ENCODE measurements at regions of chr7 and their contacts with region 1.

Region 1: GRCh38 chr7:34886850-34887249 is 150.4 kb downstream of the DPY19L1 start:
- DNase-seq: peak in 1 of 2 experiments; percentile 52
- H3K4me3 ChIP-seq: no peak overlapping the region
- H3K27ac ChIP-seq: no peak overlapping the region
- H3K4me1 ChIP-seq: peaks cover 11% of the 10 kb centered on the region
- H3K27me3 ChIP-seq: no peaks in the 10 kb centered on the region
- CTCF ChIP-seq: no peak

Region 2: GRCh38 chr7:34128762-34129161 is 758.1 kb before region 1 on chr7:
- CTCF ChIA-PET with region 1: interaction called, 11 read pairs
- POLR2A ChIA-PET with region 1: no interaction called
- intact Hi-C with region 1: no loop called
- DNase-seq: no peak
- H3K4me3 ChIP-seq: no peak overlapping the region
- H3K27ac ChIP-seq: no peak overlapping the region
- H3K4me1 ChIP-seq: no peaks in the 10 kb centered on the region
- H3K27me3 ChIP-seq: peaks cover 20% of the 10 kb centered on the region
- CTCF ChIP-seq: no peak

Region 3: DNA sequence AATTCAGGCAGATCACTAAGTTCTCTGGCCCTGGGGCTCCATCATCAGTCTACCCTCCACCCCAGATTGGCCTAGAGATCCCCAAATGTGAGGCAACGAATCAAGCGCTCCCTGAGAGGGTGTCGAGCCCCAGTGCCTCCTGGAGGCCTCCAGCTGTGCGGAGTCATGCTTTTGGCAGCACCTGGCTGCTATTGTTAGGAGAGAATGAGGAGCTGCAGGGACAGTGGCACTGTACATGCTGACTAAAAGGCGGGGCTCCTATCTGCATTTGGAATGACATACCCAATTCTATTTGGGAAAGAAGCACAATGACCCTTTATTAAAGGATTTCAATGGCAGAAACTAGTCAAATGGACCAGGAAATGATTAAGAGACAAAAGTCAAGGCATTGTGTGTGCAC is 11.4 kb before region 1 on chr7:
- CTCF ChIA-PET with region 1: no interaction called
- POLR2A ChIA-PET with region 1: no interaction called
- intact Hi-C with region 1: no loop called
- DNase-seq: no peak
- H3K4me3 ChIP-seq: no peak overlapping the region
- H3K27ac ChIP-seq: no peak overlapping the region
- H3K4me1 ChIP-seq: no peaks in the 10 kb centered on the region
- H3K27me3 ChIP-seq: no peaks in the 10 kb centered on the region
- CTCF ChIP-seq: no peak

Region 4: DNA sequence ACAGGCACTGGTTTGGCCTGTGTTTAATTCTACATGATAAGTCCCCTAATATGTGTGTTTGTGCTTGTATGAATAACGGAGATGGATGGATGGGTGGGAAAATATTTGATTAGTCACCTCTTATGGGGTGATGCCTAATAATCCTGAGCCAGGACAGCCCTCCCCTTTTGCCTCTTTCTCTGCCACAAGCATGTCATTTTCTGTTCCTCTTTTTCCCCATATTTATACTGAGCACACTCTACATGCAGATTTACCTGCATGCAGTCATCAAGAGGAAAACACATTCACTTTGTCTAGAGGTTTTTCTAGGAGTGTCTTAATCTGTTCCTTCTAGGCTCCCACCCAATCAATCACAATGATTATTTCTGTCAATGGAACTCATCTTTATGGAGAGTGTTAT is 478.7 kb after region 1 on chr7:
- CTCF ChIA-PET with region 1: no interaction called
- POLR2A ChIA-PET with region 1: interaction called, 10 read pairs
- intact Hi-C with region 1: no loop called
- DNase-seq: no peak
- H3K4me3 ChIP-seq: no peak overlapping the region
- H3K27ac ChIP-seq: no peak overlapping the region
- H3K4me1 ChIP-seq: 0 out of 2 replicates have a peak, but pooled peaks cover 4% of the 10 kb centered on the region
- H3K27me3 ChIP-seq: no peaks in the 10 kb centered on the region
- CTCF ChIP-seq: no peak